ENCODE measurements at regions of chr5 and their contacts with region 1.

Region 1: DNA sequence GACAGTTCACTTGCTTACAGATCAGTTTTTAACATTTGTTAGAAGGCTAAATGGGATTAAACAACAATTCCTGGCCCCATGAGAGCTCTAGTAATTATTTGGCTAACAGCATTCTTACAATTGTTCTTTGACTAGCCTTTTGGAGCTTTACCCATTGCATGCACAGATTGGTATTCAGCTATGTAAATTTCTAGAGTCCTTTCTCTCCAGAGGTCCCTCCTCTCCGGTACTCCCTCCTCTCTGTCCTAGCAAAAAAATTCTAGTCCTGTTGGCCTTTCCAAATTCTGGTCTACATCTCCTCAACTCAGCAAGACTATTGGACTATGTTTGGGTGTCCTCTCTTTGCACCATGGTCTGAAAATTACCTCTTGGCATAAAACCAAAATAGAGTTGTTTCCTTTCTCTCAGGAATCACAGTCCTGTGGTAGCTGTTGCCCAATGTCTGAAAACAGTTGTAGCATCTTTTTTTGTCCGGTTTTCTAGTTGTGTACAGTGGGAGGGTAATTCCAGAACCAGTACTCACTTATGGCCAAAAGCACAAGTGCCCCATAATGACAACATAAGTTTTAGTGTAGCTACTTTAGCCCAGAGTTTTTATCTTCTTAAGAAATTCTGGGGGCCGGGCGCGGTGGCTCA is 18.1 kb downstream of the SAR1B start:
- DNase-seq: no peak
- H3K4me3 ChIP-seq: no peak overlapping the region
- H3K4me3 Mint-ChIP-seq: no peak overlapping the region
- H3K27ac ChIP-seq: no peak overlapping the region
- H3K27ac Mint-ChIP-seq: peak overlapping the region in 1 of 7 donors; percentile 18
- H3K4me1 ChIP-seq: no peaks in the 10 kb centered on the region
- H3K4me1 Mint-ChIP-seq: no peaks in the 10 kb centered on the region
- H3K27me3 ChIP-seq: no peaks in the 10 kb centered on the region
- H3K27me3 Mint-ChIP-seq: no peaks in the 10 kb centered on the region
- CTCF ChIP-seq: no peak

Region 2: GRCh38 chr5:134328619-134329018 is 285.9 kb before region 1 on chr5:
- intact Hi-C with region 1: no loop called
- DNase-seq: no peak
- H3K4me3 ChIP-seq: no peak overlapping the region
- H3K4me3 Mint-ChIP-seq: no peak overlapping the region
- H3K27ac ChIP-seq: no peak overlapping the region
- H3K27ac Mint-ChIP-seq: no peak overlapping the region
- H3K4me1 ChIP-seq: no peaks in the 10 kb centered on the region
- H3K4me1 Mint-ChIP-seq: no peaks in the 10 kb centered on the region
- H3K27me3 ChIP-seq: no peaks in the 10 kb centered on the region
- H3K27me3 Mint-ChIP-seq: peaks cover 2 to 3% (median 3%) of the 10 kb centered on the region in 3 donors
- CTCF ChIP-seq: no peak

Region 3: DNA sequence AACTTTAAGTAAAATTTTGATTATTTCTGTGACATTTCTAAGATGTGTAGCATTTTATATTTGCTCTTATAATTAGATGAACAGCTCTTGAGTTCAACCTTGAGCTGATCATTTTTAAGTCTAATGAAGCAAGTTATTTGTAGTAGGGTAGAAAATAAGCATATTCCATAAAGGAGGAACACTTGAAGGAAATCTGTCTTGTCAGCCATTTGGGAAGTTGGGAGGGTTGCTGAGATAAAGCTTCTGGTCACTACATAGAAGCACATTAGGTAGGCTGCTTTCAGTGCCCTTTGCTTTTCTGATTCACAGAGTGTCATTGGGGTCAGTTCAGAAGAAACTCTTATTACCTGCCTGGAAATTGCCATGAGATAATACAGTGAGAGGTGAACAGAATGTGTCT is 78.2 kb after region 1 on chr5:
- intact Hi-C with region 1: loop called in 1 of 2 experiments (anchors 10 kb)
- DNase-seq: no peak
- H3K4me3 ChIP-seq: no peak overlapping the region
- H3K4me3 Mint-ChIP-seq: no peak overlapping the region
- H3K27ac ChIP-seq: no peak overlapping the region
- H3K27ac Mint-ChIP-seq: no peak overlapping the region
- H3K4me1 ChIP-seq: no peaks in the 10 kb centered on the region
- H3K4me1 Mint-ChIP-seq: no peaks in the 10 kb centered on the region
- H3K27me3 ChIP-seq: no peaks in the 10 kb centered on the region
- H3K27me3 Mint-ChIP-seq: no peaks in the 10 kb centered on the region
- CTCF ChIP-seq: no peak

Region 4: GRCh38 chr5:135185481-135186065 is 571.0 kb after region 1 on chr5:
- intact Hi-C with region 1: no loop called
- DNase-seq: no peak
- H3K4me3 ChIP-seq: no peak overlapping the region
- H3K4me3 Mint-ChIP-seq: no peak overlapping the region
- H3K27ac ChIP-seq: no peak overlapping the region
- H3K27ac Mint-ChIP-seq: no peak overlapping the region
- H3K4me1 ChIP-seq: no peaks in the 10 kb centered on the region
- H3K4me1 Mint-ChIP-seq: peaks cover under 1% of the 10 kb centered on the region
- H3K27me3 ChIP-seq: peaks cover 15 to 29% of the 10 kb centered on the region in 2 donors
- H3K27me3 Mint-ChIP-seq: peaks cover 19 to 32% (median 22%) of the 10 kb centered on the region in 3 donors
- CTCF ChIP-seq: no peak